ENCODE measurements at regions of chr12 and their contacts with region 1.

Region 1: GRCh38 chr12:112046003-112046402 is 32.8 kb downstream of the ERP29 start:
- DNase-seq: no peak
- ATAC-seq: peak in 1 of 4 donors; percentile 13
- H3K4me3 ChIP-seq: no peak overlapping the region
- H3K27ac ChIP-seq: no peak overlapping the region
- H3K4me1 ChIP-seq: no peaks in the 10 kb centered on the region
- H3K27me3 ChIP-seq: no peaks in the 10 kb centered on the region
- CTCF ChIP-seq: no peak

Region 2: DNA sequence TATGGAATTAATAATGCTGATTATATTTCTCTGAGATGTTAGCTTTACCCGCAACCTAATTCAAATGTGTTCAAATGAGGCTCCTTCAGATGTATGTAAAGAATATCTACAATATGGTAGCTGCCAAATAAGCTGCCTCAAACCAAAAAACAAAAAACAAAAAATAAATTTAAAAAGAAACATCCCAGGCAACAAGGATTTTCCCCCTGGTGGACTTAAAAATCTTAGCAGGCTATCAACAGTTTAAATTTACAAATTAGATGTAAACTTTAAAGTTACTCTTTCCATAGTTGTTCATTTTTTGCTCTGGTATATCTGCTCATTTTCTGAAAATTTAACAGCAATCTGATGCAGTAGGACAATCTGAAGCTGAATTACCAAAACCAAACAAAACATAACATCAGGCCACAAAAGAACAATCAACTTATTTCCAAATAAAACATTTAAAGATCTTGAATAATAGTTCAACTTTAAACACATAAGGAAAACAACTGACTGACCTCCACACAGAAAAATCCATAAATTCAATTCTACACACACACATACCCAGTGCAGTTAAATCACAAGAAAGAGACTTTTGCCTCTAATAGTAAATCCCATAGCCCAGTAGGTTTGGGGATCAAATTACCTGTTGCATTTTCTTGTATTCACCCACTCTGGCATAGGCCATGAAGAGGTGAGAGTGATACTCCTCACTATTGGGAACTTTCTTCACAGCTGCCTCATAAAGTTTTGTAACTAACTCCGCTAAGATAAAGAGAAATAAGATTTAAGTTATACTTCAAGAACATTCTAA is 41.2 kb after region 1 on chr12:
- intact Hi-C with region 1: loop called in 1 of 2 experiments (anchors 5 kb)
- DNase-seq: no peak
- ATAC-seq: no peak
- H3K4me3 ChIP-seq: no peak overlapping the region
- H3K27ac ChIP-seq: no peak overlapping the region
- H3K4me1 ChIP-seq: no peaks in the 10 kb centered on the region
- H3K27me3 ChIP-seq: no peaks in the 10 kb centered on the region
- CTCF ChIP-seq: no peak

Region 3: DNA sequence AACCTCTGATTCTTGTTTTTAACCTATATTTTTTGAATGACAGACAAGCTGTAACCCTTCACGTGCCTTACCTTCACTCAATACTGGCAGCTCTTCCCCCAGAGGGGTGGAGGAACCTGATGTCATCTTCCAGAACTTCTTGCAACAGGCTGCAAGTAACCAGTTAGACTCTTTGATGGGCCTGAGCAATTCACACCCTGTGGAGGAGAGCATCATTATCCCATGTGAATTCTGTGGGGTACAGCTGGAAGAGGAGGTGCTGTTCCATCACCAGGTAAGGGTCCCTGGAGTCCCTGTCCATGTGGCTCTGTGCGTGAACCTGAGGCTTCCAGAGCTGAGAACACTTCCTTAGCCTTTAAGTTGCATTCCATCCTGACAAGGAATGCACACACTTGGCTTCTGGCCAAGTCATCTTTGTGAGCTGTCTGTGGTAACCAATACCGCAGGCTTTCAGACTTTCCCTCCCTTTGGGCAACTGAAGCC is 102.1 kb after region 1 on chr12:
- intact Hi-C with region 1: loop called in 1 of 2 experiments (anchors 10 kb)
- DNase-seq: no peak
- ATAC-seq: no peak
- H3K4me3 ChIP-seq: no peak overlapping the region
- H3K27ac ChIP-seq: no peak overlapping the region
- H3K4me1 ChIP-seq: no peaks in the 10 kb centered on the region
- H3K27me3 ChIP-seq: no peaks in the 10 kb centered on the region
- CTCF ChIP-seq: no peak

Region 4: DNA sequence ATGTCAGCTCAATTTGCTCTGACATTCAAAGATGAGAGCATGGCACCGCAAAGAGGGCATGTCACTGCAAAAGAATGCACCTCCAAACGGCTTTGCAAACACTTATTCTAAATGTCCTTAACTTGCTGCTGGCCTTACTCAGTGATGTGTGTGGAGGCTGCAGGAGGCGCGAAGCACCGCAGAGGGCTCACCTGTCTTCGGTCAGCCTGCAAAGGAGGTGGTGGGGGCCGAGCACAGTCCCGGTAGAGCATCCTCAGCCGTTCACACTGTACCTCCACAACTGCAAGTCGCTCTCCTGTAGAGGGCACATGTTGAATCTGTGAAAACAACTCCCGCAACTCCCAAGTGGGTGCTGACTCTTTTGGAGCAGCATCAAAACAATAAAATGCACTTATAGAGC is 173.2 kb after region 1 on chr12:
- intact Hi-C with region 1: loop called in 1 of 2 experiments (anchors 10 kb)
- DNase-seq: no peak
- ATAC-seq: no peak
- H3K4me3 ChIP-seq: no peak overlapping the region
- H3K27ac ChIP-seq: no peak overlapping the region
- H3K4me1 ChIP-seq: no peaks in the 10 kb centered on the region
- H3K27me3 ChIP-seq: no peaks in the 10 kb centered on the region
- CTCF ChIP-seq: no peak

Region 5: GRCh38 chr12:112243255-112244110 is 197.5 kb after region 1 on chr12:
- intact Hi-C with region 1: loop called in 1 of 2 experiments (anchors 10 kb)
- DNase-seq: no peak
- ATAC-seq: no peak
- H3K4me3 ChIP-seq: no peak overlapping the region
- H3K27ac ChIP-seq: no peak overlapping the region
- H3K4me1 ChIP-seq: no peaks in the 10 kb centered on the region
- H3K27me3 ChIP-seq: no peaks in the 10 kb centered on the region
- CTCF ChIP-seq: no peak

Region 6: GRCh38 chr12:112584266-112584722 is 538.3 kb after region 1 on chr12:
- intact Hi-C with region 1: no loop called
- DNase-seq: no peak
- ATAC-seq: no peak
- H3K4me3 ChIP-seq: no peak overlapping the region
- H3K27ac ChIP-seq: no peak overlapping the region
- H3K4me1 ChIP-seq: no peaks in the 10 kb centered on the region
- H3K27me3 ChIP-seq: peaks cover 0 to 14% (median 0%) of the 10 kb centered on the region in 3 donors
- CTCF ChIP-seq: no peak